ENCODE measurements at regions of chr15 and their contacts with region 1.

Region 1: DNA sequence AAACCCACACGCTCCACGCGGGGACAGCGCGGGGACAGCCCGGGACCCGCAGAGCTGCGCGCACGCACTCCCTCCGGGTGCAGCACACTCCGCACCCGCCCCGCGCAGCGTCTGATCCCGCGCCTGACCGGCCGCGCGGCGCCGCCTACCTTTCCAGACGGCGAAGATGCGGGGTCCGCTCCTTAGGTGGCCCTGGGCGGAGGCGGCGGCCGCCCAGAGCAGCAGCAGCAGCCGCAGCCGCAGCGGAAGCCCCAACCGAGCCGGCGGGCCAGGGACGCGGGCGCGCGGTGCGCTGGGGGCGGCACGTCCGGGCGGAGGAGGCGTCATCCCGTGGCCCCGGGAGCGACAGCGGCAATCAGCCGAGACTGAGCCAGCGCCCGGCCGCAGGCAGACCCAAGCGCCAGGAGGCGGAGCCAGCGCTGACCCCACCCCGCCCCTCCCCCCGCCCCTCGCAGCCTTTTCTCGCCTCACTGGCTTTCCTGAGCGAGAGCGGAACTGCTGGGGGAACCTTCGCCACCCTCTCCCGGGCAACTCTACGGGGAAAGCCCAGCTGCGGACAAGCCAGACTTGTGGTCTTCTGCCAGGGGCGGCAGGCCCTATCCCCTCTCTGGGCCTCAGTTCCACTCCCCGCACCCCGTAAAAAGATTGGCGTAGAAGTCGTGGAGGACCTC is at the start of gene SEMA7A:
- DNase-seq: peak; percentile 60 to 86 (median 74)
- H3K4me3 ChIP-seq: peak within 1 kb of the TSS; percentile 58
- H3K4me3 Mint-ChIP-seq: peak within 1 kb of the TSS; percentile 84 to 93 (median 87)
- H3K27ac ChIP-seq: peak within 1 kb of the TSS; percentile 77
- H3K27ac Mint-ChIP-seq: peak within 1 kb of the TSS; percentile 84 to 98 (median 91)
- H3K4me1 ChIP-seq: peaks cover 19% of the 10 kb centered on the region
- H3K4me1 Mint-ChIP-seq: peaks cover 48 to 63% (median 51%) of the 10 kb centered on the region in 3 donors
- H3K27me3 ChIP-seq: no peaks in the 10 kb centered on the region
- H3K27me3 Mint-ChIP-seq: peaks cover 0 to 1% of the 10 kb centered on the region in 2 donors
- total RNA-seq, gene SEMA7A: 71.2 to 72.5 TPM

Region 2: GRCh38 chr15:74240002-74240568 is 193.6 kb before region 1 on chr15:
- CTCF ChIA-PET with region 1: no interaction called
- POLR2A ChIA-PET with region 1: no interaction called
- DNase-seq: no peak
- H3K4me3 ChIP-seq: no peak overlapping the region
- H3K4me3 Mint-ChIP-seq: no peak overlapping the region
- H3K27ac ChIP-seq: no peak overlapping the region
- H3K27ac Mint-ChIP-seq: no peak overlapping the region
- H3K4me1 ChIP-seq: no peaks in the 10 kb centered on the region
- H3K4me1 Mint-ChIP-seq: peaks cover 5 to 6% (median 6%) of the 10 kb centered on the region in 3 donors
- H3K27me3 ChIP-seq: peaks cover 3% of the 10 kb centered on the region
- H3K27me3 Mint-ChIP-seq: peaks cover 13 to 42% of the 10 kb centered on the region in 2 donors

Region 3: GRCh38 chr15:74402873-74403587 is 30.7 kb before region 1 on chr15:
- CTCF ChIA-PET with region 1: interaction called, 10 read pairs
- POLR2A ChIA-PET with region 1: interaction called, 18 read pairs
- DNase-seq: peak; percentile 30 to 73 (median 46)
- H3K4me3 ChIP-seq: peak overlapping the region; percentile 11
- H3K4me3 Mint-ChIP-seq: peak overlapping the region in 6 of 7 donors; percentile 12 to 78 (median 64)
- H3K27ac ChIP-seq: peak overlapping the region; percentile 39
- H3K27ac Mint-ChIP-seq: peak overlapping the region; percentile 61 to 96 (median 81)
- H3K4me1 ChIP-seq: peaks cover 51% of the 10 kb centered on the region
- H3K4me1 Mint-ChIP-seq: peaks cover 69 to 76% (median 71%) of the 10 kb centered on the region in 3 donors
- H3K27me3 ChIP-seq: no peaks in the 10 kb centered on the region
- H3K27me3 Mint-ChIP-seq: peaks cover 0 to 1% of the 10 kb centered on the region in 2 donors

Measured in CD8-positive, alpha-beta memory T cell (primary cell).